Activated CD4-positive, alpha-beta T cell treated with anti-CD3 and anti-CD28 coated beads for 36 hours (primary cell): ENCODE measurements at regions of chr18 and their contacts with region 1.

Region 1: DNA sequence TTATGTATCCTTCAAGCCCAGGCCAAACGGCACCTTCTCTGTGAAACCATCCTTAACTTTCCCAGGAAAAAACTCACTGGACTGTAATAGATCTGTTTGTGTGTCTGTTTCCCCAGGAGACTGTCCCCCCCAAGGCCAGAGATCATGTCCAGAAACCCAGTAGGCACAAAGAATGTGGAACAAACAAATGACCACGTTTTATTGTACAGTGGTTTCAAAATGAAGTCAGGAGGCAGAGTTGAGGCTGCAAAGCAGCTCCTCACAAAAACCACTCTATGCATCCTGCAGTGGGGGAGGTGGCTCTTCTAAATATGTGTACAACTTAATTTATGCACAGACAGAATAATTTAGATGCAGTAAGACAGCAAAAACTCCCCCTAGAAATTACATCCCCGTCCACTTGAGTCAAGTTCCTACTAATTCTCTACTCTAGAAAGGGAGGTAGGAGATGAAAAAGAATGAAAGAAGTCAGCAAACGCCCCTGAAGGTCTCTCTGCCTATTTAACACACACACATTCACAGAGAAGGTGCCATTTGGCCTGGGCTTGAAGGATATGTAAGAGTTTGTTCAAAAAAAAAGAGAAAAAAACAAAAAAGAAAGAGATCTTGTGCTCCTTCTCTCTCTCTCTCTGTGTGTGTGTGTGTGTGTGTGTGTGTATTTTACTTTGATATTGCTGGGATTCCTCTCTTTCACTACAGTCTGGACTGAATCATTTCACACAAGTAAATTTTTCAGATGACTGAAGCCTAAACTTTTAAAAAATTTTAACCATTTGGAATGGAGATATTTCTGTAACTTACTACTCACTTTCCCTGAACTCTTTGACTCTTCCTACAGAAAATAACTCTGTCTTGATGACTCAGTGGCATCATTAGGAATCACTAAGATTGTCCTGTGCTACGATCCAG is 19.5 kb downstream of the BCL2 start:
- DNase-seq: peak; percentile 69
- ATAC-seq: peak; percentile 71
- H3K4me3 Mint-ChIP-seq: peak overlapping the region; percentile 43
- H3K27ac Mint-ChIP-seq: peak overlapping the region; percentile 90
- H3K4me1 Mint-ChIP-seq: peaks cover 75% of the 10 kb centered on the region
- H3K27me3 Mint-ChIP-seq: no peaks in the 10 kb centered on the region

Region 2: DNA sequence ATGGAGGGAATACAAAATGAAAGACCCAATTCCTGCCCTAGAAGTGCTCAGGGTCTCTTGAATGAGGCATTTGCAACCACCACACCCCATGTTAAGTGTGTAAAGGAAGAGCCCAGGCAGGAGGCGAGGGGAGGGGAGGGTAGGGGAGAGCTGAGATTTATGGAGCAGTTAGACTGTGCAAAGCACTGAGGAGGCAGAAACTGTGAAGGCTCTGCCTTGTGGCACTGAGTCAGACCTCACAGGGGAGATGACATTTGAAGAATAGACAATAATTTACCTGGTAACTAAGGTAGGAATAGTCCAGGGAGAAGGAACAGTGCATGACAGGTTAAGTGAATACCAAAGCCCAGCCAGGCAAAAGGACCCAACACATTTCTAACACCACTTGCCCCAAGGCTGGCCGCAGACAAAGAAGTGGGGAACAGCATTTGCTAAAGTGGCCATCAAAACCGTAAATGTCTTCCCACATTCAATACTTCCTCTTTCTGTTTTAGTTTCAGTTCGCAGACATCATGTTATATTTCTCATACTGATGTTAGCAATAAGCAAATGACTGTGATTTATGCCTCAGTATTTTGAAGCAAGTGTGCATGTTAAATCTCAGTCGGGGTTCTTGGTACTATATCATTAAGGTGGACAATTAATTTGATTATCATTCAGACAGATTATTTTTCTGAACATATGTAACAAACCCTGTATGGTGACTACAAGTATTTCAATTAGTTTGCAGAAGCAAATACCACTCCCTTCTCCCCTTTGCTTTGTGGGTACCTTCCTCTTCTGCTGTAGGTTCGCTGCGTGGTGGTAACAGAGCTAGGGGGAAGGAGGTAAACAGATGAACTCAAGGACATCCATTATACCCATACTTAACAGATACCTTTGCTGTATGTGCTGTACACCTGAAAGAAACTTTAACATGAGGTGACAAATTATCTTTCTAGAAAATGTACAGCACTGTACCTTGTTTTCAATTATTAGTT is 1939.4 kb before region 1 on chr18:
- CTCF ChIA-PET with region 1: no interaction called
- POLR2A ChIA-PET with region 1: no interaction called
- intact Hi-C with region 1: no loop called
- DNase-seq: no peak
- ATAC-seq: no peak
- H3K4me3 Mint-ChIP-seq: no peak overlapping the region
- H3K27ac Mint-ChIP-seq: no peak overlapping the region
- H3K4me1 Mint-ChIP-seq: no peaks in the 10 kb centered on the region
- H3K27me3 Mint-ChIP-seq: peaks cover 5% of the 10 kb centered on the region

Region 3: GRCh38 chr18:63267975-63268721 is 31.9 kb before region 1 on chr18:
- CTCF ChIA-PET with region 1: no interaction called
- POLR2A ChIA-PET with region 1: no interaction called
- intact Hi-C with region 1: loop called in 1 of 2 experiments (anchors 5 kb)
- DNase-seq: no peak
- ATAC-seq: peak; percentile 87
- H3K4me3 Mint-ChIP-seq: no peak overlapping the region
- H3K27ac Mint-ChIP-seq: peak overlapping the region; percentile 56
- H3K4me1 Mint-ChIP-seq: peaks cover 53% of the 10 kb centered on the region
- H3K27me3 Mint-ChIP-seq: no peaks in the 10 kb centered on the region

Region 4: DNA sequence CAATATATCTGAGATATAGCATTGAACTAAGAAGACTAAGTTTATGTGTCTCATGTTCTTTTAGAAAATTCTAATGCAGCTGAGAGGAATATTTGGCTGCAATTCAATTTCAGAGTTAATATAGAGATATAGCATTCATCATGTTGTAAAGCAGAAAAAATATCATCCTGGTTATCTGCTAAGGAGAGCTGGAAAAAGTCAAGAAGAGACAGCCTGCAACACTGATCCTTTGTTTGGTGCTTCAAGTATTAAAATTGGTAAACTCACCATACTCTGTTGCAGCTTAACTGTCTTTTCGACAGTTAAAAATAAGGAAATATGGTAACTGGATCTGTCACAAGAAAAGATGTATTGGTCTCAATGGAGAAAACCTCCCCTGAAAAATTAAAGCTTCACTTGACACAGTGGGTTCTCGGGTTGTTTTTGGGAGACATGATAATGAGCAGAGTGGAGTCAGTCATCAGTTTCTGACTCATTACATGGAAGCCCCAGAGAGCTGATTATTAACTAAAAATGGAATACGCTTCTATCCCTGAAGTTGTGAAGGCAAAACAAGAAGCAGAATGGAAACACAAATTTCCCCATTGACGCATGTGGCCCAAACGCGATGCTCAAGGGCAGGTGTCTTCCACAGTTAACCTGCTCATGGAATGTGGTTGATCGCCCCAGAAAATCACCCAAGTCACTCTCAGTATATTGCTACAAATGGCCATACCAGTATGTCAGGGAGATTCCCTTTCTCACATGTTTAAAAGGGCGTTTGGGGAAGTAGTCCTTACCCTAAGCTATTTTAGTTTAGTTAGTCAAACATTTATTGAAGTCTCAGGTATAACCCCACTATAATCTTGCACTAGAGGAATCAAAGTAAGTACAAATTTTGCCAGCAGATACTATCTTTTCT is 11.3 kb after region 1 on chr18:
- CTCF ChIA-PET with region 1: interaction called, 9 read pairs
- POLR2A ChIA-PET with region 1: no interaction called
- intact Hi-C with region 1: loop called in 1 of 2 experiments (anchors 1 kb)
- DNase-seq: no peak
- ATAC-seq: no peak
- H3K4me3 Mint-ChIP-seq: no peak overlapping the region
- H3K27ac Mint-ChIP-seq: peak overlapping the region; percentile 7
- H3K4me1 Mint-ChIP-seq: peaks cover 82% of the 10 kb centered on the region
- H3K27me3 Mint-ChIP-seq: no peaks in the 10 kb centered on the region